Aorta (tissue), 5 donors: ENCODE measurements at regions of chr2 and their contacts with region 1.

Region 1: GRCh38 chr2:227238238-227239237 is 74.1 kb downstream of the COL4A3 start:
- DNase-seq: peak; percentile 72 to 86
- ATAC-seq: no peak
- H3K4me3 ChIP-seq: no peak overlapping the region
- H3K27ac ChIP-seq: no peak overlapping the region
- H3K4me1 ChIP-seq: no peaks in the 10 kb centered on the region
- H3K27me3 ChIP-seq: no peaks in the 10 kb centered on the region

Region 2: GRCh38 chr2:227130636-227131035 is 107.9 kb before region 1 on chr2:
- intact Hi-C with region 1: loop called (anchors 1 to 2 kb)
- DNase-seq: no peak
- ATAC-seq: no peak
- H3K4me3 ChIP-seq: no peak overlapping the region
- H3K27ac ChIP-seq: no peak overlapping the region
- H3K4me1 ChIP-seq: no peaks in the 10 kb centered on the region
- H3K27me3 ChIP-seq: no peaks in the 10 kb centered on the region